H1 (cell line): ENCODE measurements at regions of chr17 and their contacts with region 1.

Region 1: GRCh38 chr17:65794572-65794971 is 233.1 kb upstream of the AXIN2 start:
- DNase-seq: no peak
- H3K4me3 ChIP-seq: no peak overlapping the region
- H3K27ac ChIP-seq: no peak overlapping the region
- H3K4me1 ChIP-seq: peaks cover 0 to 11% (median under 1%) of the 10 kb centered on the region in 4 experiments; a peak in 2 of 7 replicates
- H3K27me3 ChIP-seq: no peaks in the 10 kb centered on the region
- CTCF ChIP-seq: peak; percentile 37 to 76 (median 51)
- EP300 ChIP-seq: no peak
- POLR2A ChIP-seq: no peak
- RAD21 ChIP-seq: peak; percentile 67 to 70

Region 2: GRCh38 chr17:65261682-65262636 is 532.6 kb before region 1 on chr17:
- CTCF ChIA-PET with region 1: interaction called, 11 read pairs
- POLR2A ChIA-PET with region 1: no interaction called
- DNase-seq: no peak
- H3K4me3 ChIP-seq: no peak overlapping the region
- H3K27ac ChIP-seq: no peak overlapping the region
- H3K4me1 ChIP-seq: no peaks in the 10 kb centered on the region
- H3K27me3 ChIP-seq: no peaks in the 10 kb centered on the region
- CTCF ChIP-seq: no peak
- EP300 ChIP-seq: no peak
- POLR2A ChIP-seq: no peak
- RAD21 ChIP-seq: no peak

Region 3: DNA sequence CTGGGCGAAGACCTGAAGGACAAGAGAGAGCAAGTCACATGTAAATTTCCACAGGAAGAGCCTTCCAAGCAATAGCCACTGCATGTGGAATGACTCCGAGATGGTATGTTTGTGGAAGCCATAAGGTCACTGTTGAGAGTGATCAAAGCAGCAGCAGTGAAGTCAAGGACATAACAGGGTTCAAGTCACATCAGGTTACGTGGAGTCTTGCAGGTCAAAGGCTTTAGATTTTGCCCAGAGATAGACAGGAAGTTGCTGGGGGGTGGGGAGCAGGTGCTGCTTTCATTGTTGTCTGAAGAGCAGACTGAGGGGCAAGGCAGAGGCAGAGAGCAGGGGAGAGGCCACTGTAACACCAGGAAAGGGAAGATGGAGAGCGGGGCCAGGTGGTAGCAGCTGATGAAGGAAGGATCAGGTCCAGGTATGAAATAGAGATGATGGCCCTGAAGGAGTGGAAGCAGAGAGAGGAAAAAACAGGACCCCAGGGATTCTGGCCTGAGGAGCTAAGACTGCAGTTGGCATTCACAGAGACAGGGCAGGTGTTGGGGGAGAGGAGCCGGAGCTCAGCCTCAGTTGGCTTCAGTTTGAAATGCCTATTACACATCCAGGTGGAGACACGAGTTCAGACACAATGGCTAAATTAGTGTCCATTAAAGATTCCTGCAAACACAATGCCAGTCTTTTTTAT is 103.8 kb before region 1 on chr17:
- CTCF ChIA-PET with region 1: interaction called, 10 read pairs
- POLR2A ChIA-PET with region 1: no interaction called
- DNase-seq: no peak
- H3K4me3 ChIP-seq: no peak overlapping the region
- H3K27ac ChIP-seq: no peak overlapping the region
- H3K4me1 ChIP-seq: peaks cover 1 to 6% (median 3%) of the 10 kb centered on the region in 4 experiments; a peak in 4 of 7 replicates
- H3K27me3 ChIP-seq: no peaks in the 10 kb centered on the region
- CTCF ChIP-seq: no peak
- EP300 ChIP-seq: no peak
- POLR2A ChIP-seq: no peak
- RAD21 ChIP-seq: no peak

Region 4: DNA sequence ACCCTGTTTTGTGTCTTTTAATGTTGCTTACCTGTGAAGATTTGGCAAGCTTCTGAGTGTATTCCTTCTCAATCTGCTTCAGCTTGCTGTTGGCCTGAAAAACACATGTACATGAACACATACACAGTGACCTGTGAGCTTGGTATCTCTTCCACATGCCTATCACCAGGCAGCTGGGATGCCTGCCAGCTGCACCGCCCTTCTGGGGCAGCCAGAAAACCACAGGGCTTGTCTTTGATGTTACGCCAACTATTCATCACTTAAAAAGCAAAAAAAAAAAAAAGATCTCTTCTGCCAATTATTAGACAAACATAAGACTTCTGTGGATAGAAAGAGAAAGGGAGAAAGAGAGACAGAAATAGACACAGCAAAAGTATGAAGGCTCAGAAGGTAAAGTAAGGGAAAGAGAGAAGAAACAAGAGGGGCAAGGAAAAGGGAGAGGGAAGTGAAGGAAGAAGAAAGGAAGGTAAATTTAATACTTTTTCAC is 43.9 kb before region 1 on chr17:
- CTCF ChIA-PET with region 1: no interaction called
- POLR2A ChIA-PET with region 1: no interaction called
- DNase-seq: no peak
- H3K4me3 ChIP-seq: no peak overlapping the region
- H3K27ac ChIP-seq: no peak overlapping the region
- H3K4me1 ChIP-seq: peaks cover 0 to 3% (median 0%) of the 10 kb centered on the region in 4 experiments; a peak in 1 of 7 replicates
- H3K27me3 ChIP-seq: no peaks in the 10 kb centered on the region
- CTCF ChIP-seq: no peak
- EP300 ChIP-seq: no peak
- POLR2A ChIP-seq: no peak
- RAD21 ChIP-seq: no peak

Region 5: DNA sequence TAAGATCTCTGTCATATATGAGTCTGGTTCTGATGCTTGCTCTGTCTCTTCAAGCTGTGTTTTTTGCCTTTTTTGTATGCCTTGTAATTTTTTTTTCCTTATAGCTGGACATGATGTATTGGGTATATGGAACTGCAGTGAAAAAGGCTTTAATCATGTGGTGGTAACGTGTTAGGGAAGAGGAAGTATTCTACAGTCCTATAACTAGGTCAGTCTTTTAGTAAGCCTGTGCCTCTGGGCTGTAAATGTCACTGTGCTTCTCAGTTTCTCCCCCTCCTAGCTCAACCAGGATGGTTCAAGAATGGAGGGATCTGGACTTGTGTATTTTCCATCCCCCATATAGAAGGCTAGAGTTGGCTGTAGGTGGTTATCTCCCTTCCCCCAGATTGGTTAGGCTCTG is 30.8 kb before region 1 on chr17:
- CTCF ChIA-PET with region 1: no interaction called
- POLR2A ChIA-PET with region 1: no interaction called
- DNase-seq: no peak
- H3K4me3 ChIP-seq: no peak overlapping the region
- H3K27ac ChIP-seq: no peak overlapping the region
- H3K4me1 ChIP-seq: no peaks in the 10 kb centered on the region
- H3K27me3 ChIP-seq: no peaks in the 10 kb centered on the region
- CTCF ChIP-seq: no peak
- EP300 ChIP-seq: no peak
- POLR2A ChIP-seq: no peak
- RAD21 ChIP-seq: no peak

Region 6: DNA sequence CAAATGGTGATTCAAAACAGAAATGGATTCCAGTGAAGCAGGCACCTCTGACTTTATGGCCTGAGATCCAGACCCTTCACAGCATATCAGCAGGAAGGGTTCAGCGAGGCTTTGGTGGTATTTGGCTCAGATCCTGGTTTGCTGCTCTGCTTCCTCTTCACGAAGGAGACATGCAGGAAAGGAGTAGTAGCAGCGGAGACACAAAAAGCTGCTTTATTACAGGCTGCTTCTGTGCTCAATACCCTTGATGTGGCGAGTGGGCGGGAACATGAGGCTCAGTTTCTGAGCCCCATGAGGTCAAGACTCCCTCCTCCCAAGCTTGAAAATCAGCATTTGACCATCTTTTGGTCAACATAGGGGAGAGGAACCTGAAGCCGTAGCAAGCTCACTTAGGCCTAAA is 19.8 kb before region 1 on chr17:
- CTCF ChIA-PET with region 1: interaction called, 35 read pairs
- POLR2A ChIA-PET with region 1: no interaction called
- DNase-seq: no peak
- H3K4me3 ChIP-seq: no peak overlapping the region
- H3K27ac ChIP-seq: no peak overlapping the region
- H3K4me1 ChIP-seq: peaks cover 0 to 6% (median 2%) of the 10 kb centered on the region in 4 experiments; a peak in 5 of 7 replicates
- H3K27me3 ChIP-seq: no peaks in the 10 kb centered on the region; a peak in 1 of 7 replicates
- CTCF ChIP-seq: no peak
- EP300 ChIP-seq: no peak
- POLR2A ChIP-seq: no peak
- RAD21 ChIP-seq: no peak

Region 7: GRCh38 chr17:65811043-65811442 is 16.5 kb after region 1 on chr17:
- CTCF ChIA-PET with region 1: interaction called, 12 read pairs
- POLR2A ChIA-PET with region 1: no interaction called
- DNase-seq: no peak
- H3K4me3 ChIP-seq: no peak overlapping the region
- H3K27ac ChIP-seq: no peak overlapping the region
- H3K4me1 ChIP-seq: no peaks in the 10 kb centered on the region
- H3K27me3 ChIP-seq: no peaks in the 10 kb centered on the region
- CTCF ChIP-seq: no peak
- EP300 ChIP-seq: no peak
- POLR2A ChIP-seq: no peak
- RAD21 ChIP-seq: no peak